HAP-1 (cell line): ENCODE measurements at regions of chr22 and their contacts with region 1.

Region 1: DNA sequence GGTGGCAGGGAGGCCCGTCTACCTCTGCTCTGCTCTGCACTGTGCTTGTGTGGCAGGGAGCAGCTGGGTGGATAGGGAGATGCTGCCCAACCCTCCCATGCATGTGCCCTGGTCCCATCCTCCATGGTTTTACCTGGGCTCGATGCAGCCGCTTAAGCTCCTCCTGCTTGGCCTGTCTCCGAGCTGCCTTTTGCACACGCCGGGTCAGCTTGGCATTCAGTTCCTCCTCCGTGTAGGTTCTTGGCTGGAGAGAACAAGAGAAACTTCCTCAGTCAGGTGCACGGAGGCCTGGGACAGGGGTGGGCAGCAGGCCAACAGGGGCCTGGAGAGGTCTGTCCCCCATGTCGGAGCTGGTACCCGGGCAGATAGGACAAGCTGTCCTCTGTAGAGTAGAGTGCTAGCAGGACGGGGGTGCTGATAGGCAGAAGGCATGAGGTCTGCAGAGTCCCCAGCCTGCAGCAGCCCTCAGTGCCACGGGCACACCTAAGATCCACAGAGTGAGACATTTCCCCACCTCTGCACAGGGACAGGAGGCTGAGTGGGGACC is 36.4 kb upstream of the BID start:
- DNase-seq: no peak
- H3K4me3 ChIP-seq: no peak overlapping the region
- H3K4me1 ChIP-seq: no peaks in the 10 kb centered on the region
- H3K27me3 ChIP-seq: no peaks in the 10 kb centered on the region

Region 2: GRCh38 chr22:17853073-17853472 is 42.4 kb after region 1 on chr22:
- in situ Hi-C with region 1: loop called (anchors 5 kb)
- DNase-seq: no peak
- H3K4me3 ChIP-seq: no peak overlapping the region
- H3K4me1 ChIP-seq: no peaks in the 10 kb centered on the region
- H3K27me3 ChIP-seq: no peaks in the 10 kb centered on the region

Region 3: GRCh38 chr22:17888855-17889254 is 78.2 kb after region 1 on chr22:
- in situ Hi-C with region 1: loop called (anchors 10 kb)
- DNase-seq: no peak
- H3K4me3 ChIP-seq: no peak overlapping the region
- H3K4me1 ChIP-seq: no peaks in the 10 kb centered on the region
- H3K27me3 ChIP-seq: no peaks in the 10 kb centered on the region

Region 4: GRCh38 chr22:17950651-17951214 is 140.1 kb after region 1 on chr22:
- in situ Hi-C with region 1: no loop called
- DNase-seq: no peak
- H3K4me3 ChIP-seq: no peak overlapping the region
- H3K4me1 ChIP-seq: no peaks in the 10 kb centered on the region; the same call in 1 of the 2 replicates
- H3K27me3 ChIP-seq: no peaks in the 10 kb centered on the region